ENCODE measurements at regions of chr4 and their contacts with region 1.

Region 1: GRCh38 chr4:70839589-70840093 is at the start of gene GRSF1:
- DNase-seq: peak; percentile 93 to 97
- H3K4me3 ChIP-seq: peak within 1 kb of the TSS; percentile 89 to 91
- H3K27ac ChIP-seq: peak within 1 kb of the TSS; percentile 92 to 96
- H3K4me1 ChIP-seq: peaks cover 0 to 31% (median 18%) of the 10 kb centered on the region in 4 donors
- H3K27me3 ChIP-seq: no peaks in the 10 kb centered on the region
- CTCF ChIP-seq: peak in 1 of 2 experiments; percentile 5

Region 2: GRCh38 chr4:70269674-70270073 is 570.0 kb before region 1 on chr4:
- intact Hi-C with region 1: no loop called
- DNase-seq: no peak
- H3K4me3 ChIP-seq: no peak overlapping the region
- H3K27ac ChIP-seq: no peak overlapping the region
- H3K4me1 ChIP-seq: no peaks in the 10 kb centered on the region
- H3K27me3 ChIP-seq: no peaks in the 10 kb centered on the region
- CTCF ChIP-seq: no peak

Region 3: GRCh38 chr4:70687821-70688794 is 151.5 kb before region 1 on chr4 and contains the start of gene UTP3:
- intact Hi-C with region 1: loop called (anchors 5 kb)
- DNase-seq: peak; percentile 94 to 98
- H3K4me3 ChIP-seq: peak within 1 kb of the TSS; percentile 85 to 92
- H3K27ac ChIP-seq: peak within 1 kb of the TSS; percentile 94 to 95
- H3K4me1 ChIP-seq: peaks cover 0 to 42% (median 24%) of the 10 kb centered on the region in 4 donors
- H3K27me3 ChIP-seq: no peaks in the 10 kb centered on the region
- CTCF ChIP-seq: peak; percentile 89 to 97

Region 4: GRCh38 chr4:70901984-70902576 is 62.4 kb after region 1 on chr4 and contains the start of gene MOB1B:
- intact Hi-C with region 1: loop called (anchors 2 kb)
- DNase-seq: peak; percentile 88 to 91
- H3K4me3 ChIP-seq: peak within 1 kb of the TSS; percentile 68 to 76
- H3K27ac ChIP-seq: peak within 1 kb of the TSS; percentile 87 to 89
- H3K4me1 ChIP-seq: peaks cover 0 to 10% (median 2%) of the 10 kb centered on the region in 4 donors
- H3K27me3 ChIP-seq: no peaks in the 10 kb centered on the region
- CTCF ChIP-seq: peak; percentile 21 to 49

Region 5: GRCh38 chr4:70993181-70994068 is 153.8 kb after region 1 on chr4 and contains the start of gene DCK:
- intact Hi-C with region 1: loop called (anchors 5 kb)
- DNase-seq: peak; percentile 86 to 95
- H3K4me3 ChIP-seq: peak within 1 kb of the TSS; percentile 76 to 79
- H3K27ac ChIP-seq: peak within 1 kb of the TSS; percentile 81 to 89
- H3K4me1 ChIP-seq: peaks cover 0 to 29% (median 13%) of the 10 kb centered on the region in 4 donors
- H3K27me3 ChIP-seq: no peaks in the 10 kb centered on the region
- CTCF ChIP-seq: no peak